Activated CD4-positive, alpha-beta memory T cell treated with anti-CD3 and anti-CD28 coated beads for 36 hours (primary cell): ENCODE measurements at regions of chr5 and their contacts with region 1.

Region 1: GRCh38 chr5:81851481-81852178 is 100.7 kb upstream of the SSBP2 start:
- DNase-seq: peak; percentile 93
- H3K4me3 Mint-ChIP-seq: peak overlapping the region; percentile 89
- H3K27ac Mint-ChIP-seq: peak overlapping the region; percentile 92
- H3K4me1 Mint-ChIP-seq: peaks cover 28% of the 10 kb centered on the region
- H3K27me3 Mint-ChIP-seq: no peaks in the 10 kb centered on the region

Region 2: GRCh38 chr5:81506900-81507588 is 344.6 kb before region 1 on chr5:
- CTCF ChIA-PET with region 1: interaction called, 5 read pairs
- POLR2A ChIA-PET with region 1: no interaction called
- intact Hi-C with region 1: loop called (anchors 5 kb)
- DNase-seq: peak; percentile 46
- H3K4me3 Mint-ChIP-seq: no peak overlapping the region
- H3K27ac Mint-ChIP-seq: no peak overlapping the region
- H3K4me1 Mint-ChIP-seq: no peaks in the 10 kb centered on the region
- H3K27me3 Mint-ChIP-seq: no peaks in the 10 kb centered on the region

Region 3: DNA sequence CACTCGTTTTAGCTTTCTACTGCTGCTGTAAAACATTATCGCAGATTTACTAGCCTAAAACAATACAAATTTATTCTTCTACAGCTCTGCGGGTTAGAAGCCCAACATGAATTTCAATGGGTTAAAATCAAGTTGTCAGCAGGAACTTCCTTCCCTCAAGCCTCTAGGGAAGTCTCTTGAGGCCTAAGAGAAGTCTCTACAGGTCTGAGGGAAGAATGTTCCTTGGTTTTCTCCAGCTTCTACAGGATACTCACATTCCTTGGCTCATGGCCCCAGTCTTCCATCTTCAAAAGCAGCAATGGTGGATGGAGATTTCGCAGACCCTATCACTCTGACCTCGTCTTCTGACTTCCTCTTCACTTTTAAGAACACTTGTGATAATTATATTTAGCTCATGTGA is 79.1 kb before region 1 on chr5:
- CTCF ChIA-PET with region 1: no interaction called
- POLR2A ChIA-PET with region 1: no interaction called
- intact Hi-C with region 1: no loop called
- DNase-seq: no peak
- H3K4me3 Mint-ChIP-seq: no peak overlapping the region
- H3K27ac Mint-ChIP-seq: no peak overlapping the region
- H3K4me1 Mint-ChIP-seq: peaks cover 4% of the 10 kb centered on the region
- H3K27me3 Mint-ChIP-seq: no peaks in the 10 kb centered on the region

Region 4: GRCh38 chr5:81787474-81788242 is 64.0 kb before region 1 on chr5:
- CTCF ChIA-PET with region 1: no interaction called
- POLR2A ChIA-PET with region 1: no interaction called
- intact Hi-C with region 1: no loop called
- DNase-seq: no peak
- H3K4me3 Mint-ChIP-seq: no peak overlapping the region
- H3K27ac Mint-ChIP-seq: no peak overlapping the region
- H3K4me1 Mint-ChIP-seq: peaks cover 7% of the 10 kb centered on the region
- H3K27me3 Mint-ChIP-seq: no peaks in the 10 kb centered on the region

Region 5: DNA sequence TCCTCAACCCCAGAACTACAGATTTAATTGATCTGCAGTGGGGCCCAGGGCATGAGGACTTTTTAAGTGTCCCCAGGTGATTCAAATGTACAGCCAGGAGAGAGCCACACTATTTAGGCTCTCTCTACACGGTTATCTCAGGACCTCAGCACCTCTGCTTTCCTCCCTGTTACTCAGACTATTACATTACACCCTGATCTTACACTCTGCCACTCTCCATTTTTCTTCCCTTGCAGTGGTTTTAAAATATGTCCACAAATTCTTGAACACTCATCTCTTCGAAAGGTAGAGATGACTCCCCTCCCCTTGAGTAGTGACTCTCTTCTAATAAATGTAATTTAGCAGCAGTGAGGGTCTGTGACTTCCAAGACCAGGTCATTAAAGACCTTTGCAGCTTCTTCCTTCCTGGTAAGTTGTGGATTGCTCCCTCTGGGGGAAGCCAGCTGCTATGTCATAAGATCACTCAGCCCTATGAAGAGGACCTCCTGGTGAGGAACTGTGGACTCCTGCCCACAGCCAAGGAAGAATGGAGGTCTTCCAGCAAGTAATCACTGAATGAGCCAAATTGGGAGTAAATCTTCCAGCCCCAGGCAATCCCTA is 13.2 kb before region 1 on chr5:
- CTCF ChIA-PET with region 1: interaction called, 18 read pairs
- POLR2A ChIA-PET with region 1: interaction called, 3 read pairs
- intact Hi-C with region 1: no loop called
- DNase-seq: peak; percentile 29
- H3K4me3 Mint-ChIP-seq: no peak overlapping the region
- H3K27ac Mint-ChIP-seq: no peak overlapping the region
- H3K4me1 Mint-ChIP-seq: peaks cover 5% of the 10 kb centered on the region
- H3K27me3 Mint-ChIP-seq: no peaks in the 10 kb centered on the region

Region 6: GRCh38 chr5:81971712-81972495 is 120.3 kb after region 1 on chr5 and contains the start of gene ATG10:
- CTCF ChIA-PET with region 1: interaction called, 3 read pairs
- POLR2A ChIA-PET with region 1: interaction called, 5 read pairs
- intact Hi-C with region 1: loop called (anchors 1 kb)
- DNase-seq: peak; percentile 91
- H3K4me3 Mint-ChIP-seq: peak within 1 kb of the TSS; percentile 87
- H3K27ac Mint-ChIP-seq: peak within 1 kb of the TSS; percentile 98
- H3K4me1 Mint-ChIP-seq: peaks cover 20% of the 10 kb centered on the region
- H3K27me3 Mint-ChIP-seq: no peaks in the 10 kb centered on the region
- total RNA-seq, gene ATG10: 8.5 to 9.7 TPM

Region 7: GRCh38 chr5:82165740-82166530 is 314.3 kb after region 1 on chr5:
- CTCF ChIA-PET with region 1: interaction called, 3 read pairs
- POLR2A ChIA-PET with region 1: no interaction called
- intact Hi-C with region 1: loop called (anchors 5 kb)
- DNase-seq: peak; percentile 30
- H3K4me3 Mint-ChIP-seq: no peak overlapping the region
- H3K27ac Mint-ChIP-seq: no peak overlapping the region
- H3K4me1 Mint-ChIP-seq: peaks cover 6% of the 10 kb centered on the region
- H3K27me3 Mint-ChIP-seq: no peaks in the 10 kb centered on the region

Region 8: DNA sequence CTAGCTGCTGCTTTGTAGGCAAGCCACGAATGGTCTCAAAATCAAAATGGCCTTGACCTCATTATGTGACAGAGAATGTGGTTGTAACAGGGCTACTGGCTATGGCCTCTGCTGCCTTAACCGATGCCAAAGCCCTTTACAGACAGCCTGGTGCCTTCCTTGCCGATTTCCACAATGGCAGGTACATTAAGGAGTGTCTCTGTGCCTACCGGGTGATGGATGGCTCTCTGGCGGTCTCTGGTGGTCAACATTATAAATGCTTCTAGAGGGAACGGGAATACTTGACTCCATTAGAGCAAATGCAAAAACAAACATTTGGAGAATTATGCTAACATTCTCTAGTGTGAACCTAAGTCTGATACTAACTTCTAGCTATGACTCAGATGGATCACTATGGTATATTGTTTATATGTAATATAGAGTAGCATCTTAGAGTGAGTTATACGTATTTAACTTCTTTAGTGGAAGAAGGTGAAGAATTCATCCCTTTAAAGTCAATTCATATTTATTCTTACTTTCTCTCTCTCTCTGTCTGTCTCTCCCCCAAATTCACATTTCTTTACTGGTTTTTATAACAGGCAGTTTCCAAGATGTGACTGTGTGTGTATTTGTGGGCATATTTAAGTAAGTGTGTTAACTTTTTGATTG is 374.0 kb after region 1 on chr5:
- CTCF ChIA-PET with region 1: interaction called, 5 read pairs
- POLR2A ChIA-PET with region 1: no interaction called
- intact Hi-C with region 1: loop called (anchors 10 kb)
- DNase-seq: peak; percentile 71
- H3K4me3 Mint-ChIP-seq: no peak overlapping the region
- H3K27ac Mint-ChIP-seq: no peak overlapping the region
- H3K4me1 Mint-ChIP-seq: peaks cover 2% of the 10 kb centered on the region
- H3K27me3 Mint-ChIP-seq: no peaks in the 10 kb centered on the region